ENCODE measurements at regions of chr5 and their contacts with region 1.

Region 1: DNA sequence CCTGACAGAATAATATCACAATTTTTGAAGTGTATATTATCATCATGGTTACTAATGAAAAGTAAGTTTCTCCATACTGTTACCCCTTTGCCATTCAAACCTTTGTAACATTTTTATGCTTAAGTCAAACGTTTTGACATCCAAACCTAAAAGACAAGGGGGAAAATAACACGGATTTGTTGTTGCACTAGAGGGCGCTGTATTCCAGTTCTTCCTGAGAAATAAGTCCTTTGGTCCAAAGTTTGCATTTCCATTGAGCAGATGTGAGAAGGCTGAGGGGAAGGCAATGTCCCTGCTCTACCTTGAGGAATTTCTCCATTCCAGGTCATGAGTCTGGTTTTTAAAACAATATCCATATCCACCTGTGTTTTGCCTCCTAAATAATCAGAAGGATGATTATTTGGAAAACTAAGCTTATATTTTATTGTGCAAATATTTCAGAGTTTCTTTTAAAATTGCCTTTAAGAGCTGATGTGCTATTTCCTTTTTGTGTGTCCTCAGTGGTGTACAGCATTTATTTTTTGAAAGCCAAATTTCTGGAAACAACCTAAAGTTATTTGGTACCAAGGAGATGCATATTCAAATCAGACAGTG is 9.7 kb downstream of the LECT2 start:
- DNase-seq: peak; percentile 37 to 80 (median 57)
- H3K4me3 ChIP-seq: no peak overlapping the region
- H3K27ac ChIP-seq: no peak overlapping the region
- H3K4me1 ChIP-seq: no peaks in the 10 kb centered on the region
- H3K27me3 ChIP-seq: no peaks in the 10 kb centered on the region
- CTCF ChIP-seq: peak; percentile 72 to 89 (median 82)
- POLR2A ChIP-seq: no peak

Region 2: GRCh38 chr5:135829681-135830383 is 115.2 kb before region 1 on chr5:
- intact Hi-C with region 1: no loop called
- DNase-seq: peak; percentile 61 to 88 (median 71)
- H3K4me3 ChIP-seq: no peak overlapping the region
- H3K27ac ChIP-seq: no peak overlapping the region
- H3K4me1 ChIP-seq: no peaks in the 10 kb centered on the region
- H3K27me3 ChIP-seq: peaks cover 32% of the 10 kb centered on the region
- CTCF ChIP-seq: peak; percentile 62 to 70 (median 68)
- POLR2A ChIP-seq: no peak

Region 3: GRCh38 chr5:136080483-136081216 is 135.6 kb after region 1 on chr5:
- intact Hi-C with region 1: loop called (anchors 2 to 10 kb)
- DNase-seq: peak; percentile 86 to 94 (median 90)
- H3K4me3 ChIP-seq: peak overlapping the region in 1 of 4 donors; percentile 49
- H3K27ac ChIP-seq: peak overlapping the region in 3 of 5 donors; percentile 16 to 84 (median 71)
- H3K4me1 ChIP-seq: no peaks in the 10 kb centered on the region
- H3K27me3 ChIP-seq: no peaks in the 10 kb centered on the region
- CTCF ChIP-seq: no peak
- POLR2A ChIP-seq: peak; percentile 17 to 53

Region 4: DNA sequence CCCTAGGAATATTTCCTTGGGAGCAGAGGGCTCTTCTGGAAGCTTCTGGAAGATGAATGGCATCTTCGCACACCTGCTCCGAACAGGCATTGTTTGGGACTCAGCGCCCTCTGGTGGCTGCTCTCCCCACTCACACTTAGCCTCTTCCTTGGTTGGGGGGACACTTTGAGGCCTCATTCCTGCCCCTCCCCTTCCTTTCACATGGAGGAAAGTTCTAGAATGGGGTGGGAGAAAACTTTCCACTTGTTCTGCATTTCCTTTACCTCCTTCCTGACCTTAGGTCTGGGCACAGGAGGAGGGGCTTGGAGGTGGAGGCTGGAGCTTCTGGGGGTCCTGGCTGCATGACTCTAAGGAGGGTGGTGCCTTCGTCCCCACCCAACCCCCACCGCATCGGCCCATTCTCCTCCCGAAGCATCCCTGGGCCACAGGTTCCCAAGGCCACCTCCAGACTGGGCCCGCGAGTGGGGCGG is 267.2 kb after region 1 on chr5:
- intact Hi-C with region 1: loop called (anchors 5 to 10 kb)
- DNase-seq: peak; percentile 31 to 66 (median 60)
- H3K4me3 ChIP-seq: no peak overlapping the region
- H3K27ac ChIP-seq: no peak overlapping the region
- H3K4me1 ChIP-seq: no peaks in the 10 kb centered on the region
- H3K27me3 ChIP-seq: peaks cover 13% of the 10 kb centered on the region
- CTCF ChIP-seq: peak; percentile 56 to 87 (median 82)
- POLR2A ChIP-seq: no peak